Activated CD4-positive, alpha-beta T cell treated with anti-CD3 and anti-CD28 coated beads for 36 hours (primary cell): ENCODE measurements at regions of chr12 and their contacts with region 1.

Region 1: GRCh38 chr12:47071241-47071852 is 8.1 kb upstream of the PCED1B start:
- DNase-seq: peak; percentile 17
- ATAC-seq: no peak
- H3K4me3 Mint-ChIP-seq: no peak overlapping the region
- H3K27ac Mint-ChIP-seq: no peak overlapping the region
- H3K4me1 Mint-ChIP-seq: peaks cover 24% of the 10 kb centered on the region
- H3K27me3 Mint-ChIP-seq: no peaks in the 10 kb centered on the region

Region 2: GRCh38 chr12:47164724-47165439 is 93.5 kb after region 1 on chr12:
- CTCF ChIA-PET with region 1: interaction called, 10 read pairs
- POLR2A ChIA-PET with region 1: no interaction called
- intact Hi-C with region 1: no loop called
- DNase-seq: no peak
- ATAC-seq: no peak
- H3K4me3 Mint-ChIP-seq: no peak overlapping the region
- H3K27ac Mint-ChIP-seq: no peak overlapping the region
- H3K4me1 Mint-ChIP-seq: peaks cover 9% of the 10 kb centered on the region
- H3K27me3 Mint-ChIP-seq: no peaks in the 10 kb centered on the region

Region 3: DNA sequence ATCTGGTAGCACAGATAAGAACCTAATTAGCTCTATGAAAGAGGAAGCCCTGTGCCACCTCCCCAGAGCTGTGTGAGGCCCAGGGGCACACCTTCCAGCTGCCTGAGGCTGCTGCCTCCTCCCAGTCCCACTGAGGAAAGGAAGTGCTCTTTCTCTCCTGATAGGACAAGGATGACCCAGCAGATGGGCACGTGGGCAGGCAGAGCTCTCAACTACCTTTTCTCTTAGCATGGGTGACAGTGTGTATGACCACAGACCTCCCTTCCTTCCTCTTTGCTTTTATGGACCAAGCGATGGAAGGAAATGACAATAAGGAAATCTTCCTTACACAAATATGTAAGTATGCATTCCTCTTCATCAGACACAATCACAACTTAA is 136.0 kb after region 1 on chr12:
- CTCF ChIA-PET with region 1: interaction called, 11 read pairs
- POLR2A ChIA-PET with region 1: no interaction called
- intact Hi-C with region 1: no loop called
- DNase-seq: peak; percentile 71
- ATAC-seq: peak; percentile 54
- H3K4me3 Mint-ChIP-seq: peak overlapping the region; percentile 54
- H3K27ac Mint-ChIP-seq: peak overlapping the region; percentile 92
- H3K4me1 Mint-ChIP-seq: peaks cover 78% of the 10 kb centered on the region
- H3K27me3 Mint-ChIP-seq: no peaks in the 10 kb centered on the region